CD8-positive, alpha-beta T cell (primary cell): ENCODE measurements at regions of chr12 and their contacts with region 1.

Region 1: DNA sequence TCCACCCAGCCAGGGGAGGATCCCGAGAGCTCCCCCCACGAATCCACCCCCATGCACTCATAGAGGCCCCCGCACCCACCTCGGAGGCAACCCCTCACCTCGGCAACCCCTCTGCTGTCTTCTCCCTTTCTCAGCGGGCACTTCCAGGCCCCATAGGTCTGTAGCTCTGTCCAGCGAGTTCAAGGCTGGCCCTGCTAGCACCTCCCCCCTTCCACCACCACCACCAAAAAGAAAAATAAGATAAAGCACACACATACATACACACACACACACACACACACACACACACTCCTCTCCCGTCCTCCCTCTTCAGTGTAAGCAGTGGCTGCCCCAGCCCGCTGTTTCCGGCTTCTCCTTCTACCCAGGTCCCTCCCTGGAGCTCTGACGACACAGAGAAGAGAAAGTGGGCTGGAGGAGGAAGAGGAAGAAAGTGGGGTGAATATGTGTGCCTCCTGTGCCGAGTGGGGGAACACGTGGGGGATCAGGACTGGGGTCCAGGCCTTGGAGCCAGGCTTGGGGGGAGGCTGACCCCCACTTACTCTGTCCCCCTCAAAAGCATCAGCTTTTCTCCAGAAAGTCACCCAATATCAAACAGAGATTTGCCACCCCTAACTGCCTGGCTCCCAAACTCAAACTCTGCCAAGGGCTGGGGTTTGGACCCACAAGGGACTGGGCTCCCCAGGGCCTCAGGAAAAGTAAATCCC is at the start of gene STAT6:
- DNase-seq: peak; percentile 67 to 96 (median 85)
- ATAC-seq: peak; percentile 60
- H3K4me3 ChIP-seq: peak within 1 kb of the TSS; percentile 88 to 100
- H3K4me3 Mint-ChIP-seq: peak within 1 kb of the TSS; percentile 91
- H3K27ac ChIP-seq: peak within 1 kb of the TSS; percentile 87 to 98
- H3K27ac Mint-ChIP-seq: peak within 1 kb of the TSS; percentile 94
- H3K4me1 ChIP-seq: peaks cover 24% of the 10 kb centered on the region
- H3K4me1 Mint-ChIP-seq: peaks cover 52% of the 10 kb centered on the region
- H3K27me3 ChIP-seq: no peaks in the 10 kb centered on the region
- H3K27me3 Mint-ChIP-seq: no peaks in the 10 kb centered on the region
- CTCF ChIP-seq: no peak
- total RNA-seq, gene STAT6: 116 to 127 TPM

Region 2: DNA sequence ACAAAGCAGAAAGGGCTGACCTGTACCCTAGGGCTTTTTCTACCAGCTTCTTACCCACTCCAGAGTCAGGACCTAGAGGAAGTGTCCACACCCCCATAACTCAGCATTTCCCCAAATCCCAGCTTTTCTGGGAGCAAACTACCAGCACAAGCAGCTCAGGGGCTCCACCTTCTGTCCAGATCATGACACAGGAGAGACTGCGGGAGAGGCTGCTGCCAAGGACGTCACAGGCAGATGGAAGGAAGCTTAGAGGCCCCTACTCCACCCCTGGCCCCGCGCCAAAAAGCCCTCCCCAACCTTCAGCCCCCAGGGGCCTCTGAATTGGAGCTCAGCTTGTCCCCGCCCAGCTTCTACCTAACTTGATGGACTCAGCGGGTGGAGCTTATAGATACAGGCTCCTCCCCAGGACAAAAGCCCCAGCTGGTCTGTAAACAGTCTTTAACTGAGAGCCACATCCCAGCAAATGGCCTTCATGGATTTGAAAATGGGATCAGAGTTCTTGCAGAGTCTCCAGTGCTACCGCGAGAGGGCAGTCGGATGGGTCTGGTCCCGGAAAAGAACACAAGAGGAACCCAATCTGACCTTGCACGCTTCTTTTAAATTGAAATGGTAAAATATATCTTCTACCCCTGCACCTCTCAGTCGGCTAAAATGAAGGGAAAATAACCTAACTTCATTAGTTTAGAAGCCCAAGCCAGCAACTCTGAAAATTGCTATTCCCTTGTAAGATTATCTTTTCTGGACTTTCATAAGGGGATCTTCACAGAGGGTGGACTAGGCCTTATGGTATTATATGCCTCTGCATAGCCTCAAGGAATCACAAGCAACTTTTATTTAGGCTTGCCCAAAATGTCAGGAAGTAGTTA is 474.3 kb before region 1 on chr12:
- CTCF ChIA-PET with region 1: no interaction called
- POLR2A ChIA-PET with region 1: interaction called, 3 read pairs
- intact Hi-C with region 1: loop called in 1 of 2 experiments (anchors 5 kb)
- DNase-seq: peak; percentile 91 to 99 (median 97)
- ATAC-seq: peak; percentile 71
- H3K4me3 ChIP-seq: peak overlapping the region; percentile 58 to 79
- H3K4me3 Mint-ChIP-seq: peak overlapping the region; percentile 98
- H3K27ac ChIP-seq: peak overlapping the region; percentile 79 to 87
- H3K27ac Mint-ChIP-seq: peak overlapping the region; percentile 97
- H3K4me1 ChIP-seq: peaks cover 45% of the 10 kb centered on the region
- H3K4me1 Mint-ChIP-seq: peaks cover 57% of the 10 kb centered on the region
- H3K27me3 ChIP-seq: no peaks in the 10 kb centered on the region
- H3K27me3 Mint-ChIP-seq: no peaks in the 10 kb centered on the region
- CTCF ChIP-seq: peak; percentile 71

Region 3: GRCh38 chr12:56759263-56759908 is 351.8 kb before region 1 on chr12:
- CTCF ChIA-PET with region 1: interaction called, 12 read pairs
- POLR2A ChIA-PET with region 1: interaction called, 3 read pairs
- intact Hi-C with region 1: loop called (anchors 2 to 5 kb)
- DNase-seq: no peak
- ATAC-seq: no peak
- H3K4me3 ChIP-seq: no peak overlapping the region
- H3K4me3 Mint-ChIP-seq: no peak overlapping the region
- H3K27ac ChIP-seq: no peak overlapping the region
- H3K27ac Mint-ChIP-seq: no peak overlapping the region
- H3K4me1 ChIP-seq: no peaks in the 10 kb centered on the region
- H3K4me1 Mint-ChIP-seq: no peaks in the 10 kb centered on the region
- H3K27me3 ChIP-seq: no peaks in the 10 kb centered on the region
- H3K27me3 Mint-ChIP-seq: peaks cover 5% of the 10 kb centered on the region
- CTCF ChIP-seq: no peak

Region 4: DNA sequence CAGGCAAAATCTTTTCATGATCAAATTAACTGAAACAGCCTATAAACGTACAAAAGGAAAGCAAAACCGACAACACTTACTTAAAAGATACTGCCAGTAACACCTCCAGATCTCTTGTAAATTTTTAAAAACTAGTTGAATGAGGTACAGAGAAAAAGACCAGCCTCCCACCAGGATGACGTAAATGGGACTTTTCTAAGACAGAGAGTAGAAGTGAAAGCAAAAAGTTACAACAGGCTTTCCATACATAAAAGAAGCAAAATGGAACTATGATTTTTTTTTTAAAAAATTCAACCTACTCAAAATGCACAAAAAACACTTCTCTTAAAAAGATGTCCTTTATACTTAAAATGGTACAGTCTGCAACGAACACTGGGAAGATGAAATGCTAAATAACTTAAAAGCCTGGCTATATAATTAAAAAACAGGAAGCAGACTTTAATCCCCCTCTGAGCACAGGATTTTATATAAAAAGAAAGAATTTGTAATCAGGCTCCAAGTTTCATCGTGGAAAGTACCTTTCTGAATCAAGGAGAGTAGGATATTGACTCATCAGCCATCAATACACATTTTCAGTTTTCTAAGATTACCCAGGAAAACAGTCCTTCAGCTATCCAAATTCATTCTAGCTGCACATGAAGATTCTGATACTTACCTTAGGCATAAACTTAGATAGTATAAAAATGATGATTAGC is 47.0 kb before region 1 on chr12:
- CTCF ChIA-PET with region 1: interaction called, 547 read pairs
- POLR2A ChIA-PET with region 1: interaction called, 105 read pairs
- intact Hi-C with region 1: loop called (anchors 1 kb)
- DNase-seq: peak in 6 of 9 experiments; percentile 9 to 94 (median 58)
- ATAC-seq: peak; percentile 96
- H3K4me3 ChIP-seq: peak overlapping the region; percentile 19 to 37
- H3K4me3 Mint-ChIP-seq: peak overlapping the region; percentile 78
- H3K27ac ChIP-seq: peak overlapping the region; percentile 61 to 88
- H3K27ac Mint-ChIP-seq: peak overlapping the region; percentile 95
- H3K4me1 ChIP-seq: peaks cover 24% of the 10 kb centered on the region
- H3K4me1 Mint-ChIP-seq: peaks cover 28% of the 10 kb centered on the region
- H3K27me3 ChIP-seq: no peaks in the 10 kb centered on the region
- H3K27me3 Mint-ChIP-seq: no peaks in the 10 kb centered on the region
- CTCF ChIP-seq: no peak

Region 5: GRCh38 chr12:57088459-57089248 is 22.5 kb before region 1 on chr12 and contains the start of gene NAB2:
- CTCF ChIA-PET with region 1: interaction called, 547 read pairs
- POLR2A ChIA-PET with region 1: interaction called, 244 read pairs
- intact Hi-C with region 1: loop called (anchors 1 kb)
- DNase-seq: peak; percentile 87 to 97 (median 95)
- ATAC-seq: peak; percentile 60
- H3K4me3 ChIP-seq: peak within 1 kb of the TSS; percentile 87 to 95
- H3K4me3 Mint-ChIP-seq: peak within 1 kb of the TSS; percentile 92
- H3K27ac ChIP-seq: peak within 1 kb of the TSS; percentile 97 to 100
- H3K27ac Mint-ChIP-seq: peak within 1 kb of the TSS; percentile 95
- H3K4me1 ChIP-seq: peaks cover 47% of the 10 kb centered on the region
- H3K4me1 Mint-ChIP-seq: peaks cover 64% of the 10 kb centered on the region
- H3K27me3 ChIP-seq: no peaks in the 10 kb centered on the region
- H3K27me3 Mint-ChIP-seq: no peaks in the 10 kb centered on the region
- CTCF ChIP-seq: no peak
- total RNA-seq, gene NAB2: 5.9 to 6.7 TPM

Region 6: DNA sequence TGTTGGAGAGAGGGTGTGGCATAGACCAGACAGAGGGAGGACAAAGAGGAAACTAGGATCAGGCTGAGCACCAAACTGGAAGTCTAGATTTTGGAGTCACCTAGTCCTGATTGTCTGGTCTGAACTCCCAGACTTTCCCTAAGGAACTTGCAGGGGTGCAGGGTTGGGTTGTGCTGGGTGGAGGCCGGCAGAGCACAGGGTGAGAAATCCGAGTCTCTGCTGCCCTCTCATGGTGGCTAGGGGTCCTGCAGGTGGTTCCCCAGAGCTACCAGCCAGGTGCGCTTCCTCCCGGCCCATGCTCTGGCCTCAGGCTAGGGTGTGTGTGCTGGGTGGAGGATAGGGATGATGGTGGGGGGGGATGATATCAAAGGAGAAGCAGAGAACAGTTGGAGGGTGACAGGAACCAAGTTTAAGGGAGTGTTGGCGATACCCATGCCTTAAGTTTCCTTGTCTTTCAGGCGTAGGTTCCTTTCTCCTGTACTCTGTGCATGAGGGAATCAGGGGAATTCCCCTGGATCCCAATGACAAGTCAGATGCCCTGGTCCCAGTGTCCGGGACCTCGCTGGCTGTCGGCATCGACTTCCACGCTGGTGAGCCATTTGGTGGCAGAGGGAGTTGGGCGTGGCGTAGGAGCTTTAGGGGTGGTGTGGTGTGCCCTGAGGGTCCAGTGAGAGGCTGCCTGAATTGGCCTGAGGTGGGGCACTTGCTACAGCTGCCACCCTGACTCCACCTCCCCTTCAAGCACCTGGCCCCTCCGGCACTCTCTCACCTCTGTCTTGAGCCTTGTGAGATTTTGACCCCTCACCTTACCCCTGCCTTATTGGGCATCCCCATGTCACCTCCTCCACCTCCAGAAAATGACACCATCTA is 72.0 kb after region 1 on chr12:
- CTCF ChIA-PET with region 1: interaction called, 9 read pairs
- POLR2A ChIA-PET with region 1: interaction called, 4 read pairs
- intact Hi-C with region 1: loop called in 1 of 2 experiments (anchors 1 kb)
- DNase-seq: peak; percentile 63 to 88 (median 82)
- ATAC-seq: peak; percentile 100
- H3K4me3 ChIP-seq: no peak overlapping the region
- H3K4me3 Mint-ChIP-seq: no peak overlapping the region
- H3K27ac ChIP-seq: no peak overlapping the region
- H3K27ac Mint-ChIP-seq: no peak overlapping the region
- H3K4me1 ChIP-seq: peaks cover 5% of the 10 kb centered on the region
- H3K4me1 Mint-ChIP-seq: peaks cover 2% of the 10 kb centered on the region
- H3K27me3 ChIP-seq: no peaks in the 10 kb centered on the region
- H3K27me3 Mint-ChIP-seq: no peaks in the 10 kb centered on the region
- CTCF ChIP-seq: peak; percentile 83